Transverse colon (tissue), 4 donors: ENCODE measurements at regions of chr11 and their contacts with region 1.

Region 1: GRCh38 chr11:64846998-64847666 is 2.7 kb upstream of the CDC42BPG start:
- DNase-seq: peak; percentile 96
- H3K4me3 ChIP-seq: no peak overlapping the region
- H3K27ac ChIP-seq: peak overlapping the region; percentile 7 to 95 (median 80)
- H3K4me1 ChIP-seq: peaks cover 29 to 64% (median 41%) of the 10 kb centered on the region in 4 donors
- H3K27me3 ChIP-seq: no peaks in the 10 kb centered on the region
- CTCF ChIP-seq: peak; percentile 96 to 99 (median 98)
- EP300 ChIP-seq: no peak
- POLR2A ChIP-seq: no peak

Region 2: DNA sequence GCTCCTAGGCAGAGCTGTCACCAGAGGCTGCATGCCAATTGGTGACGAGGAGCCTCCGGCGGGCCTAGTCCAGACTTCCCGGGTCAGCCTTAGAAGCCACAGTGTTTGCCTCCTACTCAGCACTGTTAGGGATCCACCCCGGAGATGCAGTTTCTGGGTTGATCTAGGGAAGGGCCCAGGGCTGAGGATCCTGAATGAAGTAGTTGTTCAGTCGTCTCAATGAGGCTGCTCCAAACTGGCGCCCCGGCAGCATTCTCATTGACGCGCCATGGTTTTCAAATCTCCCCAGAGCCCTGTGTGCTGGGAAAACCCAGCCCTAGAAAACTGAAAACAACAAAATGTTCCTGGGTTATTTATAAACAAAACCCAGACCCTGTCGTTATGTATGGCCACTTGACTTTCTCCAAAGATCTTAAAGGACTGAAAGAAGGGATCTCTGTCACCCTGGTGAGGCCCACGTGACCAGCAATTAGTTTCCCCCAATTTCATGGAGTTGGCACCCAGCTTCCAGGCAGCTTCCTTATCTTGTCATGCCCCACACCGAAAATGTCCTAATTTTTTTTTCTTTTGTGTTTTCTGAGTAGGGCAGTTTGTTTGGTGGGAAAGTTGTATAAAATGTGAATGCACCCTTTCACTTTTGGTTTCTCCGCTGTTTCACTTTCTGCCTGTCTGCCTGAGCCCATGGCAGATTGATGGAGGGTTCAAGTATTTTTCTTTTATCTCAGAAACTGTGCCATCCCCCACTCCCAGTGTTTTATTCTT is 33.3 kb after region 1 on chr11:
- in situ Hi-C with region 1: loop called in 1 of 4 experiments (anchors 5 kb)
- intact Hi-C with region 1: no loop called
- DNase-seq: no peak
- H3K4me3 ChIP-seq: peak overlapping the region in 1 of 4 donors; percentile 6
- H3K27ac ChIP-seq: peak overlapping the region; percentile 88 to 98 (median 92)
- H3K4me1 ChIP-seq: peaks cover 18 to 42% (median 30%) of the 10 kb centered on the region in 4 donors
- H3K27me3 ChIP-seq: no peaks in the 10 kb centered on the region
- CTCF ChIP-seq: no peak
- EP300 ChIP-seq: no peak
- POLR2A ChIP-seq: no peak

Region 3: DNA sequence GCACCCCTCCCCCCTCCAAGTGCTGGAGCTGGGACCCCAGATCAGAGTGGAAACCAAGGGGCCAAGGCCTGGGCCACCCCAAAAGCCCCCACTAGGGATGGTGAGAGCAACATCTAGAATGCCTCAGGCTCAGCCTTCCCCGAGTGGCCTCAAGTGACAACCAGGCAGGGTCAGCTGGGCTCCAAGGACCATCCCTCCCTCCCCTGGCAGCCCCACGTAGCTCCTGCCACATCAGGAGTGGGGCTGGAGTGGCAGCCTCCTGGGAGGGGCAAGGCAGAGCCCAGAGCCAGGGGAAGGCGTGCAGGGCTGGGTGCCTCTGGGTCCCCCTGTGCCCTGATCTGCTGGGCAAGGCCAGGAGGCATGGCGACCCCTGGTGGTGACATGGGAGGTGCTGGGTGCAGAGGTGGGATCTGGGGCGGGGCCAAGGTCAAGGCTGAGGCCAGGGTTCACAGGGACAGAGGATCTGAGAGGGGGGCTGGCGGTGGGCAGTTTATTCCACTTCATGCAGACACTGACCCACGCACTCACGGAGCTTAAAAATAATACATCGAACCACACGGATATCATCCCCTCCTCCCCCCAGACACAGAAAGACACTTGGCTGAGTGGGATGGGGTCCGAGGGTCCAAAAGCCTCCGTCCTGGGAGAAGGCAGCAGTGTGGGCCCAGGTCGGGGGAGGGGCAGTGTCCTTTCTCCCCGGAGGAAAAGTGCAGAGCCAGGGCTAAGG is 47.1 kb after region 1 on chr11:
- in situ Hi-C with region 1: loop called in 3 of 4 experiments (anchors 5 to 10 kb)
- intact Hi-C with region 1: loop called (anchors 5 kb)
- DNase-seq: peak; percentile 95
- H3K4me3 ChIP-seq: peak overlapping the region in 3 of 4 donors; percentile 1 to 66 (median 54)
- H3K27ac ChIP-seq: peak overlapping the region; percentile 88 to 96 (median 94)
- H3K4me1 ChIP-seq: peaks cover 11 to 16% (median 11%) of the 10 kb centered on the region in 4 donors
- H3K27me3 ChIP-seq: no peaks in the 10 kb centered on the region
- CTCF ChIP-seq: peak; percentile 88 to 99 (median 92)
- EP300 ChIP-seq: no peak
- POLR2A ChIP-seq: no peak